Activated naive CD4-positive, alpha-beta T cell treated with anti-CD3 and anti-CD28 coated beads for 36 hours (primary cell): ENCODE measurements at regions of chr22 and their contacts with region 1.

Region 1: DNA sequence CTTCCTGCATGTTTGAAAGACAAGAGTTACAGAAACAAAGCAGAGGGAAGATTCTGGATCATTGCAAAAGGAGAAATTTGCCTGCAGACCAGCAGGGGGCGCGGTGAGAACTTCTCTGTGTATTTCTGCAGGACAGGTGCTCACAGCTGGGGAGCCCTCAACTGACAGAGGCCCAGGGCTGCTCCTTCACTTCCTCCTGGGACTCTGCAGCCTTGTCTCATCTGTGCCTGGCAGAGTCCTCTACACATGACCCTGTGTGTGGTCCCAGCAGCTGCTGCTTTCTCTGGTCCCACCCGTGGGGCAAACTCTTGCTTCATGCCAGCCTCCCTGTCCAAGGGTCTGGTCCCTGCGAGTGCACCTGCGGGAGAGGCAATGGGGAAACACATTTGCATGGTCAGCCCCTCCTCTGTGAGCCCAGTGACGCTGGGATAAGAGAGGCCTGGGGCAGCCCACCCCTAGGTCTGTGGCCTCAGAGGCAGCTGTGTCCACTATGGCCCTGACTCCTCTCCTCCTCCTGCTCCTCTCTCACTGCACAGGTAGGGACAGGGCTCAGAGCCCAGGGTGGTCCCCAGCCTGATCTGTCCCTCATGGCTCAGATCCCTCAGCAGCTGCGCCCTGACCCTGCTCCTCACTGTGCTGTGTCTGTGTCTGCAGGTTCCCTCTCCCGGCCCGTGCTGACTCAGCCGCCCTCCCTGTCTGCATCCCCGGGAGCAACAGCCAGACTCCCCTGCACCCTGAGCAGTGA is 43.2 kb upstream of the VPREB1 start:
- DNase-seq: peak; percentile 82
- H3K4me3 Mint-ChIP-seq: no peak overlapping the region
- H3K27ac Mint-ChIP-seq: no peak overlapping the region
- H3K4me1 Mint-ChIP-seq: peaks cover 4% of the 10 kb centered on the region
- H3K27me3 Mint-ChIP-seq: no peaks in the 10 kb centered on the region

Region 2: GRCh38 chr22:22092974-22093373 is 108.4 kb before region 1 on chr22:
- CTCF ChIA-PET with region 1: no interaction called
- intact Hi-C with region 1: no loop called
- DNase-seq: no peak
- H3K4me3 Mint-ChIP-seq: no peak overlapping the region
- H3K27ac Mint-ChIP-seq: no peak overlapping the region
- H3K4me1 Mint-ChIP-seq: peaks cover 9% of the 10 kb centered on the region
- H3K27me3 Mint-ChIP-seq: peaks cover 29% of the 10 kb centered on the region

Region 3: GRCh38 chr22:22144858-22145257 is 56.5 kb before region 1 on chr22:
- CTCF ChIA-PET with region 1: no interaction called
- intact Hi-C with region 1: no loop called
- DNase-seq: no peak
- H3K4me3 Mint-ChIP-seq: no peak overlapping the region
- H3K27ac Mint-ChIP-seq: no peak overlapping the region
- H3K4me1 Mint-ChIP-seq: no peaks in the 10 kb centered on the region
- H3K27me3 Mint-ChIP-seq: peaks cover 38% of the 10 kb centered on the region

Region 4: GRCh38 chr22:22181341-22181850 is 20.0 kb before region 1 on chr22:
- CTCF ChIA-PET with region 1: interaction called, 35 read pairs
- intact Hi-C with region 1: no loop called
- DNase-seq: no peak
- H3K4me3 Mint-ChIP-seq: no peak overlapping the region
- H3K27ac Mint-ChIP-seq: no peak overlapping the region
- H3K4me1 Mint-ChIP-seq: no peaks in the 10 kb centered on the region
- H3K27me3 Mint-ChIP-seq: peaks cover 7% of the 10 kb centered on the region

Region 5: GRCh38 chr22:22410121-22410520 is 208.8 kb after region 1 on chr22:
- CTCF ChIA-PET with region 1: no interaction called
- intact Hi-C with region 1: no loop called
- DNase-seq: no peak
- H3K4me3 Mint-ChIP-seq: no peak overlapping the region
- H3K27ac Mint-ChIP-seq: no peak overlapping the region
- H3K4me1 Mint-ChIP-seq: no peaks in the 10 kb centered on the region
- H3K27me3 Mint-ChIP-seq: peaks cover 34% of the 10 kb centered on the region